Left lung (tissue), 14 donors: ENCODE measurements at regions of chr19 and their contacts with region 1.

Region 1: DNA sequence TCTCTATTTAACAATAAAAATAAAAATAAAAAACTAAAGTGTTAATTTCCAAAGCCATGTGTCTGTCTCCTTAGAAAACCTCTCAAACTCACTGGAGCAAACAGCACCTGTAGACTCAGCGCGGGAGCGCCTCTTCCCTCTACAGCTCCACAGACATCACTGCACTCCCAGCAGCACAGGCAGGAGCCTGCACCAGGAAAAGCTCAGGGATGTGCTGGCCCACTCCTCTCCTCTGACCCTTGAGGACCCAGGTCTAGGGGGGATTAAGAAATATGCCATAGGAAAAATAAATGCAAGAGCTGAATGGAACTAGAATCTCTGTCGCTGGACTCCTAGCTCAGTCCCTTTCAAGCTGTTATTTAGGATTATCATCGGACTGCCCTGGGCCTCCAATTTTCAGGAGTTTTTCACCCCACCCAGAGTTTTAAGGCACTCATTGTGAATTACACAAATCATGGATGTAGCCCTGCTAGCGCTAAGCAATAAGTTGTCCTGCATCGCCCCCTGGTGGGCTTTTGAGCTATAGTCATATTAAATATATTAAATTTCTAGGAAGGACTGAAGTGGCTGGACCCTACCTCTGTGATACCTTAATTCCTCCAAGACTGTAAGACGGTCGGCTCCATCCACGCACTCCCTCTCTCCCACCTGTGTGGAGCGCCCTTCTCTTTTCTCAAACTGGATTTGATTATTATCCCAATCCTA is 333.9 kb downstream of the UQCRFS1 start:
- DNase-seq: peak in 3 of 4 donors; percentile 42 to 84 (median 48)
- ATAC-seq: peak; percentile 74
- H3K4me3 ChIP-seq: no peak overlapping the region
- H3K27ac ChIP-seq: no peak overlapping the region
- H3K4me1 ChIP-seq: no peaks in the 10 kb centered on the region
- H3K27me3 ChIP-seq: peaks cover 0 to 18% of the 10 kb centered on the region in 2 donors
- CTCF ChIP-seq: peak; percentile 39 to 54

Region 2: DNA sequence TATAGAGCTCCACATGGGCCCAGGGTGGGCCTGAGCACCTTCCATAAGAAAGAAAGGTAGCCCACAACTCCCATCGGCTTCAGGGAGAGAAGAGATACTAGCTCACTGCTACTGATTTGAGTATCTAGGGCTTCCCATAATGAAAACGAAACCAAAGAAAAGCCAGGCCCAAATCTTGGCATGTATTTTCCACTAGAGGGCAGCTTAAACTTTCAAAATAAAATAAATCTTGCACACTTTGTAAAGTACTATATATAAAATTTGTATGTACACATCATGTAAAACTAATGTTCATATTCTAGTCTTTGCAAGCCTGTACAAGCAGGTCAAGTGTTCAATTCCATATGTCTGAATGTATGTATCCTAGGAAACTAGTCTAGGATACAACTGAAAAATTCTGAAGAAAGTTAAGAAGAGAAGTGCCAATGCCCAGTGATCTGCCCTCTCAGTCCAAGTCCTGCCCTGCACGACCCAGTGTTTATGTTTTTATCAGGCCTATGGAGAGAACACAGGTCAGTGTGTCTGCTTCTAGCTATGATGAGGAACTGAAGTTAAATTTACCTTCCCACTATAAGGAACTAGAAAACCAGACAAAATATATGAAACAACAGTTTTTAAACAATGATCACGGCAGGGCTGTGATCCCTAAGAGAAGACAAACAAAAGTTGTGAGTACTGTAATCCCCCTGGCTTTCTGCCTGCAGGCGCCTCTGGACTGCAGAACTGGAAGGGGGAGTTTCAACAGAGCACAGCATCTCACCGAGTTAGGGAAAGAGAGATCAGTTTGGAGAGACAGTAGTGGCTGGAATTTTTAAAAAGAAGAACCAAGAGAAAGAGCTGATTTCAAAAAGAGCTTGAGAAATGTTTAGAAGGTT is 141.8 kb before region 1 on chr19:
- intact Hi-C with region 1: loop called in 1 of 2 experiments (anchors 10 kb)
- DNase-seq: peak in 1 of 4 donors; percentile 55
- ATAC-seq: peak; percentile 70
- H3K4me3 ChIP-seq: no peak overlapping the region
- H3K27ac ChIP-seq: no peak overlapping the region
- H3K4me1 ChIP-seq: no peaks in the 10 kb centered on the region
- H3K27me3 ChIP-seq: peaks cover 0 to 7% of the 10 kb centered on the region in 2 donors
- CTCF ChIP-seq: peak; percentile 45 to 50